ENCODE measurements at regions of chr16 and their contacts with region 1.

Region 1: DNA sequence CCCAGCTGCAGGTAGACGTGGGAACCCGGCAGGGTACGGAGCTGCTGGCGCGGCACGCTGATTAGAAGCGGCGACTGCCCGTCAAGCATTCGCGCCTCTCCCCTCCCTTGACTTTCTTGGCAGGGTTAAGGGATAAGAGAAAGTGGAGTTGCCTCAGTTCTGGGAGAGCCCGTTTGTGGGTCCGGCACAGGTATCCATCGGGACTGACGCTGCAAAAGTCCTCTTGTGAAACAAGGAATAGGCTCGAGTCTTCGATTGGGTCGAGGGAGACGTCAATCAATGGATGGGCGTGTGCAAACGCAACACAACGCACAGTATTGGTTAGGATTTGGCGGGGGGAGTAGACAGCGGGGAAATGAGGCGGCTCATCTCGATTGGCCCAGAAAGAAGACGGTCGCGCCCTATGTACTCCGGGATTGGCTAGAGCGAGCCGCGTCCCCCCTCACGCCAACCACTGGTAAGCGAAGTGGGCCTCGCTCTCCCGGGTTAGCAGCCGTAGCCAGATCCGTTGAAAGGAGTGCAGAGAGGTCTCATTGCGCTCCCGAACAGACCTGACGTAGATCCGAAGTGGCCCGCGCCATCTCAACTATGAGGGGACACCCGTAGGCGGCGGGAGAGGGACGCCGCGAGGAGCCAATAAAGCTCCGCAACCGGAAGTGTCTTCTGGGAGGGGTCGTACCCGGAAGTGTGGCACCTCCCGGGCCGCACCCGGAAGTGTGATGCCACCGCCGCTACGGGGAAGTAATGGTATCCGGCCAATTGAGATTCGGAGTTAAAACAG is at the start of gene MON1B:
- DNase-seq: peak; percentile 99
- ATAC-seq: peak; percentile 98
- H3K4me3 ChIP-seq: peak within 1 kb of the TSS; percentile 82 to 94 (median 82)
- H3K27ac ChIP-seq: peak within 1 kb of the TSS; percentile 90
- H3K4me1 ChIP-seq: peaks cover 34% of the 10 kb centered on the region
- H3K27me3 ChIP-seq: no peaks in the 10 kb centered on the region; a peak in 1 of 5 replicates
- CTCF ChIP-seq: no peak
- EP300 ChIP-seq: no peak
- POLR2A ChIP-seq: peak; percentile 80 to 87
- RAD21 ChIP-seq: peak; percentile 55
- total RNA-seq, gene MON1B: 13.8 and 15.6 TPM in 2 replicates

Region 2: GRCh38 chr16:77406677-77407076 is 216.0 kb after region 1 on chr16:
- CTCF ChIA-PET with region 1: no interaction called
- POLR2A ChIA-PET with region 1: no interaction called
- in situ Hi-C with region 1: no loop called
- intact Hi-C with region 1: no loop called
- DNase-seq: peak; percentile 15
- ATAC-seq: peak; percentile 40; the same call in 1 of the 3 replicates
- H3K4me3 ChIP-seq: no peak overlapping the region
- H3K27ac ChIP-seq: no peak overlapping the region
- H3K4me1 ChIP-seq: no peaks in the 10 kb centered on the region
- H3K27me3 ChIP-seq: no peaks in the 10 kb centered on the region
- CTCF ChIP-seq: peak; percentile 28
- EP300 ChIP-seq: no peak
- POLR2A ChIP-seq: no peak
- RAD21 ChIP-seq: peak; percentile 13; the same call in 1 of the 2 replicates

Region 3: GRCh38 chr16:77514500-77515220 is 324.0 kb after region 1 on chr16:
- CTCF ChIA-PET with region 1: no interaction called
- POLR2A ChIA-PET with region 1: no interaction called
- in situ Hi-C with region 1: no loop called
- intact Hi-C with region 1: no loop called
- DNase-seq: no peak
- ATAC-seq: no peak
- H3K4me3 ChIP-seq: no peak overlapping the region
- H3K27ac ChIP-seq: no peak overlapping the region
- H3K4me1 ChIP-seq: no peaks in the 10 kb centered on the region
- H3K27me3 ChIP-seq: peaks cover 0 to 14% of the 10 kb centered on the region in 2 experiments; a peak in 2 of 5 replicates
- CTCF ChIP-seq: no peak
- EP300 ChIP-seq: no peak
- POLR2A ChIP-seq: no peak
- RAD21 ChIP-seq: no peak

Region 4: GRCh38 chr16:78729687-78730086 is 1539.0 kb after region 1 on chr16:
- CTCF ChIA-PET with region 1: no interaction called
- POLR2A ChIA-PET with region 1: no interaction called
- in situ Hi-C with region 1: no loop called
- intact Hi-C with region 1: loop called (anchors 10 kb)
- DNase-seq: peak; percentile 82
- ATAC-seq: peak; percentile 64
- H3K4me3 ChIP-seq: no peak overlapping the region
- H3K27ac ChIP-seq: peak overlapping the region; percentile 58
- H3K4me1 ChIP-seq: peaks cover 82% of the 10 kb centered on the region
- H3K27me3 ChIP-seq: no peaks in the 10 kb centered on the region
- CTCF ChIP-seq: no peak
- EP300 ChIP-seq: peak; percentile 70 to 82; a peak in 3 of 4 replicates
- POLR2A ChIP-seq: no peak
- RAD21 ChIP-seq: no peak

Measured in HepG2 (cell line).